ENCODE measurements at regions of chr2 and their contacts with region 1.

Region 1: GRCh38 chr2:120995656-120996190 is 260.1 kb downstream of the GLI2 start:
- DNase-seq: no peak
- H3K4me3 ChIP-seq: no peak overlapping the region
- H3K27ac ChIP-seq: no peak overlapping the region
- H3K4me1 ChIP-seq: no peaks in the 10 kb centered on the region
- H3K27me3 ChIP-seq: peaks cover 50% of the 10 kb centered on the region
- CTCF ChIP-seq: no peak

Region 2: GRCh38 chr2:120403261-120404020 is 592.3 kb before region 1 on chr2:
- CTCF ChIA-PET with region 1: no interaction called
- POLR2A ChIA-PET with region 1: no interaction called
- intact Hi-C with region 1: no loop called
- DNase-seq: peak; percentile 91 to 99
- H3K4me3 ChIP-seq: no peak overlapping the region
- H3K27ac ChIP-seq: peak overlapping the region; percentile 86
- H3K4me1 ChIP-seq: peaks cover 68% of the 10 kb centered on the region
- H3K27me3 ChIP-seq: no peaks in the 10 kb centered on the region
- CTCF ChIP-seq: no peak

Region 3: GRCh38 chr2:121058852-121059558 is 63.3 kb after region 1 on chr2:
- CTCF ChIA-PET with region 1: no interaction called
- POLR2A ChIA-PET with region 1: no interaction called
- intact Hi-C with region 1: no loop called
- DNase-seq: no peak
- H3K4me3 ChIP-seq: no peak overlapping the region
- H3K27ac ChIP-seq: no peak overlapping the region
- H3K4me1 ChIP-seq: no peaks in the 10 kb centered on the region
- H3K27me3 ChIP-seq: peaks cover 57% of the 10 kb centered on the region
- CTCF ChIP-seq: no peak

Region 4: GRCh38 chr2:121319953-121320352 is 324.2 kb after region 1 on chr2:
- CTCF ChIA-PET with region 1: interaction called, 11 read pairs
- POLR2A ChIA-PET with region 1: no interaction called
- intact Hi-C with region 1: no loop called
- DNase-seq: no peak
- H3K4me3 ChIP-seq: no peak overlapping the region
- H3K27ac ChIP-seq: no peak overlapping the region
- H3K4me1 ChIP-seq: no peaks in the 10 kb centered on the region
- H3K27me3 ChIP-seq: no peaks in the 10 kb centered on the region
- CTCF ChIP-seq: no peak

Measured in PC-9 (cell line).